Activated CD8-positive, alpha-beta T cell treated with anti-CD3 and anti-CD28 coated beads for 36 hours (primary cell): ENCODE measurements at regions of chr9 and their contacts with region 1.

Region 1: GRCh38 chr9:98848450-98849149 is 41.1 kb downstream of the GALNT12 start:
- DNase-seq: peak; percentile 87
- ATAC-seq: peak; percentile 95
- H3K4me3 Mint-ChIP-seq: no peak overlapping the region
- H3K27ac Mint-ChIP-seq: no peak overlapping the region
- H3K4me1 Mint-ChIP-seq: peaks cover 11% of the 10 kb centered on the region
- H3K27me3 Mint-ChIP-seq: no peaks in the 10 kb centered on the region
- CTCF ChIP-seq: peak; percentile 95

Region 2: DNA sequence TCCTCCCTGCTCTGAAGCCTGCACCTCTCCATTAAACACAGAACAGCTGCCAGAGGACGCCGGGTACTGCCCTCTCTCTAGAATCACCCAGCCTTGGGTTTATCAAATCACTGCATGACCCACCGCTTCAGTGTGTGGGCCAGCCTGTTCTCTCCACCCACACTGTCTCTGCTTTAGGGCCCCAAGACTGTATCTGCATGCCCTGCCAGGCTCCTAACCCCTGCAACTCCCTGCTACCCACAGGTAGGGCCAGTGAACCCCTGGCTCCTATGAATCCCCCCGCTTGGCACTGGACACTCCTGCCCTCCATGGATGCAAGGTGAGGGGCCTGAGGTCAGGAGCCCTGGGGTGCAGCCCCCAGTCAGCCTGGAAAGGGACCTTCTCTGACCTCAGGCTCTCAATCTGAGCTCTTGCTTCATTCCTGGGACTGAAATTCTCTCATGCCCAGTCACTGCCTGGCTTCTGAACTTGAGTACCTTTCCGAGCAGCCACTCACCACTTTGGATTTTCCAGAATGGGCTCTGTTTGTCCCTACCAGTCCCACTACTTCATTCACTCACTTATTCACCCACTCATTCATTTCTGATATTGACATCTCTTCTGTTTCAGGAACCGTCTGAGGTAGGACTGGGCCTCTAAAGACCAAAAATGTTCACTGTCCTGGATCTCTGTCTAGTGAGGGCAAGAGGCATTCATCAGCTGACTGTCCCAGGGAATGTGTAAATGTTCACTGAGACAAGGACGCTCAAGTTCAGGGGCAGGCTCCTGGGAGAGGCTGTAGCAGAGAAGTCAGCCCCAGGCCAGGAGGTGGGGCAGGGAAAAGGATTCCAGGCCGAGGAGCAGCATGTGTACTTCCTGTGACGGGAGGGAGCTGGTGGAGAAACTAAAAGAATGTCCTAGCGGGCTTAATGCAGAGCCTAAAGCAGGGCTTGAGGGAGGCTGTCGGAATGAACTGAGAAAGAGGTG is 346.0 kb before region 1 on chr9:
- CTCF ChIA-PET with region 1: no interaction called
- POLR2A ChIA-PET with region 1: no interaction called
- intact Hi-C with region 1: no loop called
- DNase-seq: no peak
- ATAC-seq: no peak
- H3K4me3 Mint-ChIP-seq: no peak overlapping the region
- H3K27ac Mint-ChIP-seq: no peak overlapping the region
- H3K4me1 Mint-ChIP-seq: no peaks in the 10 kb centered on the region
- H3K27me3 Mint-ChIP-seq: peaks cover 9% of the 10 kb centered on the region
- CTCF ChIP-seq: no peak

Region 3: DNA sequence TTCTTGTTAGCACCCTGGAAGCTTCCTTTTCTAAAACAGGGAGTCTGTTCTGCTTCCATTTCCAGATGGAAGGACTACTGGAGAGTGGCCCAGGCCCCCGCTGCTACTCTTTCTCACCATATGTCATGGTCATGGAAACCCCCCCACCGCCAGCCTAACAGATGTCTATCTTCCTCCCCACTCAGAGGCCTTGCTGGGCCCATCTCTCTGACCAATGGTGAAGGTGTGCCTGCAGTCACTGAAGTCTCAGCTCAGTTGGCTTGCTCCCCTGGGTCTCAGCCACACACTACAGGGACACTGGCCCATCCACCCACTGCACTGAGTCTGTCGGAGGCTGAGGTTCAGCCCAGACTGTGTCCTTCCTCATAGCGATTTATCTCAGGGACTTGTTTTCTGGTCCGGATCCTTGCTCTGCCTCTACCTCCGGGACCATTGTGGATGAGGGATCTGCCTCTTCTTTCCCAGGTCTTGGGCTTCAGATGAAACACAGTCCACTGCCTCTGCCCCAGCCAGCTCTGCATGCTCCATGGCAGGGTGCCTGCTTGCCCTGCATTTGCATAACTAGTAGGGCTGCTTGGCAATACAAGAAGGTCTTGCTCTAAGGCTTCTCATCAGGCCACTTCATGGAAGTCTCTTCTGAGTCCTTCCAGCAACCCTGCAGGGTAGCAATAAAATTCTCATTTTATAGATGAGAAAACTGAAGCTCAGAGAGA is 10.3 kb before region 1 on chr9:
- CTCF ChIA-PET with region 1: interaction called, 33 read pairs
- POLR2A ChIA-PET with region 1: interaction called, 3 read pairs
- intact Hi-C with region 1: no loop called
- DNase-seq: no peak
- ATAC-seq: no peak
- H3K4me3 Mint-ChIP-seq: no peak overlapping the region
- H3K27ac Mint-ChIP-seq: no peak overlapping the region
- H3K4me1 Mint-ChIP-seq: no peaks in the 10 kb centered on the region
- H3K27me3 Mint-ChIP-seq: no peaks in the 10 kb centered on the region
- CTCF ChIP-seq: no peak

Region 4: DNA sequence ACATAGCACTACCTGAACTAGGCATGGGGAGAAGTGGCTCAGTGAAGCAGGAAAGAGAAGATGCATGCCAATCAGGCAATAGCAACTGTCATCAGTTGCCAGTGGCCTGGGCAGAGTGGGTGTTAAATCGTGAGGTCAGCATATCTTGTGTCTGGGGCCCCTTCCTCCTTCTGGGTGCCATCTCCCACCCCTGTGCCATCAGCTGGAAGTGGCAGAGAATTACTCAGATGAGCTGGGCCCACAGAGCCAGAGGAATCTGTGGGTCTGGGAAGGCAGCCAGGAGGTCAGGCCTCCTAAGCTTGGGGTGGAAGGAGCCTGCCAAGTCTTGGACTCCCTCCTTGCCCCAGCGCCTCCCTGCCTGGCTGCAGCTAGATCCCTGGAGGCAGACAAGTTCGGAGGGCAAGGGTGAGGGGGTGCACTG is 25.4 kb after region 1 on chr9:
- CTCF ChIA-PET with region 1: interaction called, 16 read pairs
- POLR2A ChIA-PET with region 1: no interaction called
- intact Hi-C with region 1: no loop called
- DNase-seq: no peak
- ATAC-seq: no peak
- H3K4me3 Mint-ChIP-seq: no peak overlapping the region
- H3K27ac Mint-ChIP-seq: no peak overlapping the region
- H3K4me1 Mint-ChIP-seq: no peaks in the 10 kb centered on the region
- H3K27me3 Mint-ChIP-seq: peaks cover 8% of the 10 kb centered on the region
- CTCF ChIP-seq: no peak

Region 5: DNA sequence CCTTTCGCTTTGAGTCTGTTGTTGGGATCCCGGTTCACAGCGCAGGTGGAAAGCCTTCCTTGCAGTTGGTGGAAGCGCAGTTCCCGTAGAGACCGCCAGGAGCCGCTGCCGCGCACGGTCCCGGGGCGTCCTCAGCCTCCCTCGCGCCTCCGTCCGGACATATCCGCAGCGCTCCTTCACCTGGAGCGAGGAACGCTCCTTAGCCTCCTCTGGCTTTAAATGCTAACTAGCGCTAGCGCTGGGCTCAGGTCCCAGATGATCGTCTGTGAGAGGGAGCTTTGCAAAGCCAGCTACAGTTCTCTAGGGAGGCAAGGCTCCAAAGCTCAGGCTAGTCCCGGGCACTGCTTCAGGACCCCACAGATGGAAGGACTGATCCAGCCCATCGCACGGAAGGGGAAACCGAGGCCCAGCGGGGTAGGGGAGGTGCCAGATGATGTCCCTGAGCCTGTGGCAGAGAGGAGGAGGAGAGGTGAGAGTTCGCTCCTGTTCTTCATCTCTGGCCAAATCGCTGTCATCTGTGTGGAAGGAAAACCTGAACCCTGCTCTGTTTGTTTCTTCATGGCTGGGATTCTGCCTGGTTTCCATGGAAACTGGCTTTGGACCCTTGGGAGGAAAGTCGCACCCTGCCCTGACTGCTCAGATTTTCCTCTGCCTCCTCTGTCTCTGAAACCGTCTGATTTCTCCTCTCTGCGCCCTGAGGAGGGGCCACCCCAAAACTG is 126.6 kb after region 1 on chr9:
- CTCF ChIA-PET with region 1: interaction called, 14 read pairs
- POLR2A ChIA-PET with region 1: no interaction called
- intact Hi-C with region 1: loop called (anchors 10 kb)
- DNase-seq: peak; percentile 86
- ATAC-seq: peak; percentile 99
- H3K4me3 Mint-ChIP-seq: no peak overlapping the region
- H3K27ac Mint-ChIP-seq: no peak overlapping the region
- H3K4me1 Mint-ChIP-seq: peaks cover 9% of the 10 kb centered on the region
- H3K27me3 Mint-ChIP-seq: no peaks in the 10 kb centered on the region
- CTCF ChIP-seq: peak; percentile 93